Thyroid gland (tissue), 4 donors: ENCODE measurements at regions of chr20 and their contacts with region 1.

Region 1: GRCh38 chr20:19995220-19995863 is 21.8 kb upstream of the NAA20 start:
- DNase-seq: peak; percentile 42 to 47
- H3K4me3 ChIP-seq: no peak overlapping the region
- H3K27ac ChIP-seq: peak overlapping the region in 2 of 3 donors; percentile 6
- H3K4me1 ChIP-seq: peaks cover 20 to 59% of the 10 kb centered on the region in 2 donors
- H3K27me3 ChIP-seq: no peaks in the 10 kb centered on the region
- CTCF ChIP-seq: peak in 5 of 6 experiments; percentile 53 to 87 (median 78)
- POLR2A ChIP-seq: no peak

Region 2: GRCh38 chr20:19692685-19693119 is 302.6 kb before region 1 on chr20:
- intact Hi-C with region 1: loop called (anchors 5 kb)
- DNase-seq: peak; percentile 46 to 58
- H3K4me3 ChIP-seq: no peak overlapping the region
- H3K27ac ChIP-seq: no peak overlapping the region
- H3K4me1 ChIP-seq: no peaks in the 10 kb centered on the region
- H3K27me3 ChIP-seq: no peaks in the 10 kb centered on the region
- CTCF ChIP-seq: peak; percentile 75 to 93 (median 92)
- POLR2A ChIP-seq: no peak

Region 3: GRCh38 chr20:19784511-19785172 is 210.7 kb before region 1 on chr20:
- intact Hi-C with region 1: loop called (anchors 5 kb)
- DNase-seq: peak; percentile 66 to 72
- H3K4me3 ChIP-seq: no peak overlapping the region
- H3K27ac ChIP-seq: peak overlapping the region; percentile 53 to 80 (median 69)
- H3K4me1 ChIP-seq: peaks cover 27 to 36% of the 10 kb centered on the region in 2 donors
- H3K27me3 ChIP-seq: no peaks in the 10 kb centered on the region
- CTCF ChIP-seq: peak; percentile 21 to 91 (median 74)
- POLR2A ChIP-seq: no peak

Region 4: DNA sequence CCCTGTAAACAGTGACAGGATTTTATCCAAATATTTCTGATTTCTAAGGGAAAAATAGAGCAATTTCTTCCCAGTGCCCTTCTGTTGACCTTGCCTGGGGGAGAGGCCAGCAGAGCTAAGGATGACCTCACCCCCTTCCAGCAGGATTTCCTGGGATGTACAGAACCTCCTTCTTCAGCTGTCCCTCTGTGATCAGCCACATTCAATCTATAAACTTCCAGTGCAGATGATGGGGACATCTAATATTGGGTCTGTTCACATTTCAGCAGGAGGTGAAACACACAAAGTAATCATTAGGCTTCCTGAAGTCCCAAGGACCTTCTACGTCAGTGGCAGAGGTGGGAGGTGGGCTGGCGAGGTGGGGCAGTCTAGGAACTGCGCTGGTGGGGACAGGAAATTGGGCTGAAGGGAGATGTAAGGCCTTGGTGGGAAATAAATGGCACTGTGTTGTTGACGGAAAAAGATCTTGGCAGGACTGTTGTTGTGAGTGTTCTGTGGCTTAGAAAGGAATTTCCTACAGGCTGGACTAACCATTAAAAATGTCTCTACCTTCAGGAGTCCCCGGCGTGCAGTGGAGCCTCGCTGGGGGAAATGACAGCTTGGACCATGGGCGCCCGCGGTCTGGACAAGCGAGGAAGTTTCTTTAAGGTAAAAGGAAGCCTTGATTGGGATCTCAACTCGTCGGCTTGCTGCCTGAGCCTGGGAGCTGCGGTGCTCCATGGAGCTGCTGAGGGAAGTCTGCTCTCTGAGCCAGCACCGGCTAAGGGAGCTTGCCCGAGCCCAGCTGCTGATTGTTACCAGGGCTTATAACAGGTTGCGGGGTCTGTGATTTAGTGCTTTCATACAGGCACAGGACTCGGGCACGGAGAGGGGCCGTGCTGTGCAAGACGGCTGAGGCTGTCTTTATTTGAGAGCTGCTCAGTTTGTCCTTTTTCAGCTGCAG is 106.1 kb before region 1 on chr20:
- intact Hi-C with region 1: loop called (anchors 10 kb)
- DNase-seq: peak in 1 of 2 donors; percentile 6
- H3K4me3 ChIP-seq: no peak overlapping the region
- H3K27ac ChIP-seq: peak overlapping the region; percentile 81 to 88 (median 87)
- H3K4me1 ChIP-seq: peaks cover 59 to 60% of the 10 kb centered on the region in 2 donors
- H3K27me3 ChIP-seq: no peaks in the 10 kb centered on the region
- CTCF ChIP-seq: no peak
- POLR2A ChIP-seq: no peak

Region 5: GRCh38 chr20:19934792-19935491 is 60.4 kb before region 1 on chr20:
- intact Hi-C with region 1: no loop called
- DNase-seq: peak; percentile 68
- H3K4me3 ChIP-seq: no peak overlapping the region
- H3K27ac ChIP-seq: peak overlapping the region; percentile 45 to 78 (median 72)
- H3K4me1 ChIP-seq: peaks cover 14 to 40% of the 10 kb centered on the region in 2 donors
- H3K27me3 ChIP-seq: no peaks in the 10 kb centered on the region
- CTCF ChIP-seq: no peak
- POLR2A ChIP-seq: peak in 1 of 2 donors; percentile 51